Right ventricle myocardium inferior (tissue), 1 donor: ENCODE measurements at regions of chr5 and their contacts with region 1.

Region 1: DNA sequence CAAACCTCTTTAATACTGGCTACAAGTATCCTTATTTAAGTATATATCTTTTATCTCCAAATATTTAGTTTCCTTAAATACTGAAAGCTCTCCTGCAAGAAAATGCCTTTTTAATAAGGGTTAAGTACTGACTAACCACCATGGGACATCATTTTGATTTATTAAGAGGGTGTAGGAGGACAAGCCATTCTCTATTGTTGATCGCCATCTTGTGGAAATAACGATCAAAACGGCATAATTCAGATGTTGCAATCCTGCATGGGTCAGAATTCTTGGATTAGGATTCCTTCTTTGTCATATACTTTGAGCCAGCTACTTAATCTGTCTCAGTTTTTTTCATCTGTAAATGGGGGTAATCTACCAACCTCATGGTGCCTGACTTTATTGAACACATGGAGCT is 28.7 kb upstream of the C5orf46 start:
- DNase-seq: no peak
- ATAC-seq: peak; percentile 73

Region 2: DNA sequence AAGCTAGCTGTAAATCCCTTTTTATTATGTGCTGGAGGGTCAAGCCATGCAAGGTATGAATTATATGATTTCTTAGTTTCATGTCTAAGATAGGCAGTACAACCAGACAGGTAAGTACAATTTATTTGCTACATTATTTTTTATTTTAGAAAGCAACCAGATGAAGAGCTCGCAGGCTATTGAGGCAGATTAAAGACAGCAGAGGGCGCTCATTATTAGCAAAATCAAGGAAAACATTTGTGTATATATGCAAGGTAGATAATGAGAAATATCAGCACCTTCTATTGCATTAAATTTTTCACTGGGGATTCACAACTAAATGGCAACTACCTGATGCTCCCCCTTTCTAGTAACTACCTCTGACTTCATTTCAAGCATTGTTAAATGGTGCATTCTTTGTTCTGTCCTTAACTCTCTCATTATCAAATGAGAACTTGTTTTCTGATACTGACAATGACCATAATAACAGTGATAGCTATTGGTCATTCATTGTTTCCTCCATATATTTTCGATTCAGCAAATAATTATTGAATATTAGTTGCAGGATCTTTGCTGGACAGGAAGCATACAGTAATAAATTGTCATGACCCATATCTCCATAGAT is 47.9 kb before region 1 on chr5:
- intact Hi-C with region 1: loop called (anchors 1 kb)
- DNase-seq: no peak
- ATAC-seq: no peak